ENCODE measurements at regions of chr6 and their contacts with region 1.

Region 1: GRCh38 chr6:157461000-157461915 is 80.3 kb downstream of the ZDHHC14 start:
- DNase-seq: peak; percentile 75
- H3K4me3 Mint-ChIP-seq: peak overlapping the region; percentile 63
- H3K27ac Mint-ChIP-seq: peak overlapping the region; percentile 95
- H3K4me1 Mint-ChIP-seq: peaks cover 66% of the 10 kb centered on the region
- H3K27me3 Mint-ChIP-seq: no peaks in the 10 kb centered on the region

Region 2: GRCh38 chr6:157054531-157054979 is 406.7 kb before region 1 on chr6:
- intact Hi-C with region 1: loop called (anchors 1 kb)
- DNase-seq: peak; percentile 35
- H3K4me3 Mint-ChIP-seq: peak overlapping the region; percentile 53
- H3K27ac Mint-ChIP-seq: peak overlapping the region; percentile 95
- H3K4me1 Mint-ChIP-seq: peaks cover 33% of the 10 kb centered on the region
- H3K27me3 Mint-ChIP-seq: no peaks in the 10 kb centered on the region

Region 3: DNA sequence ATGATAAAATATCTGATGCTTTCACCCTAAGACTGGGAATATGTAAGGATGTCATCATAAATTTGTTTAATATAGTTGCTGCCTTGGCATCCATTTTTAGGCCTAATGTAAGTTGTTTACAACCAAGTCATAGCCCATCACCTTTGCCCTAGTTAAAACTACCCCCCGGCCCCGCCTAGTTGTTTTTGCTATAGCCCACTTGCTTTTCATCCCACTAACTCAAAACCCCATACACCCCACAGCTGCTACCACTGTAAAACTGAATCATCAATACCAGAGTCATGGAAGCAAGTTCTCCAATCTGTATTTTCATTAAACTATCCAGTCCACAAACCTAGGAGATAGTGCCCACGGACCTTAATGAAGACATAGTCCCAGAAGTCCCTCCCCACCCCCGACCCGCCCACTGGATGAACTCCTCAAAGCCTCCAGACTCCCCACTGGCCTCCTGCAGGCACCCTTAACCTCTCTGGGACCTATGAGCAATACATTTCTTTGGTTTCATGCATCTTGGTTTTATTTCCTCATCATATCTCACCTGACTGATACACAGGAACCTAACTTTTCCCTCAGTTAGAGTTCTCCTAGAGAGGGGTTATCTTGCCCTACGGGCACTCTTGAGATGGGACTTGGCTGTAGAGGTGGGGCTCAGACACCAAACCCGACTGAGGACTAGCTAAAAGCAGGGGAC is 92.8 kb before region 1 on chr6:
- intact Hi-C with region 1: loop called (anchors 1 kb)
- DNase-seq: no peak
- H3K4me3 Mint-ChIP-seq: no peak overlapping the region
- H3K27ac Mint-ChIP-seq: peak overlapping the region; percentile 52
- H3K4me1 Mint-ChIP-seq: peaks cover 20% of the 10 kb centered on the region
- H3K27me3 Mint-ChIP-seq: peaks cover 46% of the 10 kb centered on the region

Region 4: DNA sequence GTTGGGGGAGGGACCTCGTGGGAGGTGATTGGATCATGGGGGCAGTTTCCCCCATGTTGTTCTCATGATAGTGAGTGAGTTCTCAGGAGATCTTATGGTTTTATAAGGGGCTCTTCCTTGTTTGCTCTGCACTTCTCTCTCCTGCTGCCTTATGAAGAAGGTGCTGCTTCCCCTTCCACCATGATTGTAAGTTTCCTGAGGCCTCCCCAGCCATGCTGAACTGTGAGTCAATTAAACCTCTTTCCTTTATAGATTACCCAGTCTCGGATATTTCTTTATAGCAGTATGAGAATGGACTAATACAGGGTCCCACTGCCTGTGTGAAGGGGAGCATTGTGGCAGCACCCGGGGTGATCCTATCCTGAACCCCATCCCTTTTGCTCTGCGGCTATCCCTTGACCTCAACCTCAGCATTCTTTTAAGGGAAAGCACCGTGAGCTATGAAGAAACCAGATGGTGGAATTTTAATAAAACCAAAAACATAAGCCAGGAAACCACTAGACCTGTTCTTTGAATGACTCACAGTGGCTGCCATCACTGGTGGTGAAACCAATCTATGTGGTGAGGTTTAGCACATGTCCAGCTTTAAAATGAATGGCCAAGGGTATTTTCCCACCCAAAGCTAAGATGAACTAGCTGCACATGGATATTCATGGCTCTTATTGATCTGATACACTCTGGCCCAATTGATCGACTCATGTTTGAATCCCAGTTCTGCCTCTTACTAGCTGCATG is 18.0 kb before region 1 on chr6:
- intact Hi-C with region 1: loop called (anchors 1 kb)
- DNase-seq: no peak
- H3K4me3 Mint-ChIP-seq: peak overlapping the region; percentile 43
- H3K27ac Mint-ChIP-seq: peak overlapping the region; percentile 85
- H3K4me1 Mint-ChIP-seq: peaks cover 30% of the 10 kb centered on the region
- H3K27me3 Mint-ChIP-seq: peaks cover 3% of the 10 kb centered on the region

Region 5: DNA sequence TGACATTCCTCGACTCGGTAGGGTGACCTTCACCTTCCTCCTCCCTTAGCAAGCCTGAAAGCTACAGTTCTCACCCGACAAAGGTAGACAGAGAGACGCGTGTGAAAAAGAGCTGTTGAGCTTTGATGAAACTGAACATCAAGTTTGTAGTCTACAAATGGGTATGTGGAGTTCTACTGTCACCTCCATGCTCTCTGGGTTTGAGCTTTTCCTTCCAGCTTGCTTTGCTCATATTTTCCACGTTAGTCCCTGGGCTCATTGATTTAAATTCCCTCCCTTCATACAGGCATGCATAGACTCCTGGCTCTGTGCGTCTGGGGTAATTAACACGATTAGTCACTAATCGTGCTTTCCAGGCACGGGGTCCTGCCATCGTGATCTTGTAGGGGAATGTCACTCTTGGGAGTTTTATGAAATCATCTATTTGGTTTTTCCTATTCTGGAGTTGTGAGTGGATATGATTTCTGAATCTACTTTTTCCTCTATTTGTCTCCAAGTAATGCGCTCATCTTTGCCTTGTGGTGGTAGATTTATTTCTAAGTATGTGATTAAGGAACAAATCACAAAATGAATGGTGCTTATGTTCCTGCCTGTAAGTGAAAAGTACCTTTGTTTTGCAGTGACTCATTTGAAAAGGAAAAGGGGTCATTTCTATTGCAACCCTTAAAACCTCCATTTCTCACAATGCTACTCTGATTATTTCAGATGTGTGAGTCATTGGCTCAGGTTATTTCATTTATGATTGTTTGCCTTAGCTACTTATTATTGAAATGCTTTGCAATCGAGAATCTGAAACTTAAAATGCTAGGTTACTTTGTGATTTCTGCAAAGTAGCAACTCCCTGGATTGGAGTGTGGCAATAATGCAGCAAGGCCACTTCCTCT is 74.3 kb after region 1 on chr6:
- intact Hi-C with region 1: loop called (anchors 1 kb)
- DNase-seq: peak; percentile 8
- H3K4me3 Mint-ChIP-seq: peak overlapping the region; percentile 2
- H3K27ac Mint-ChIP-seq: peak overlapping the region; percentile 73
- H3K4me1 Mint-ChIP-seq: peaks cover 55% of the 10 kb centered on the region
- H3K27me3 Mint-ChIP-seq: peaks cover 8% of the 10 kb centered on the region

Region 6: GRCh38 chr6:157879873-157880254 is 418.6 kb after region 1 on chr6:
- intact Hi-C with region 1: loop called (anchors 10 kb)
- DNase-seq: no peak
- H3K4me3 Mint-ChIP-seq: no peak overlapping the region
- H3K27ac Mint-ChIP-seq: peak overlapping the region; percentile 38
- H3K4me1 Mint-ChIP-seq: peaks cover 73% of the 10 kb centered on the region
- H3K27me3 Mint-ChIP-seq: no peaks in the 10 kb centered on the region